B cell (primary cell): ENCODE measurements at regions of chr19 and their contacts with region 1.

Region 1: DNA sequence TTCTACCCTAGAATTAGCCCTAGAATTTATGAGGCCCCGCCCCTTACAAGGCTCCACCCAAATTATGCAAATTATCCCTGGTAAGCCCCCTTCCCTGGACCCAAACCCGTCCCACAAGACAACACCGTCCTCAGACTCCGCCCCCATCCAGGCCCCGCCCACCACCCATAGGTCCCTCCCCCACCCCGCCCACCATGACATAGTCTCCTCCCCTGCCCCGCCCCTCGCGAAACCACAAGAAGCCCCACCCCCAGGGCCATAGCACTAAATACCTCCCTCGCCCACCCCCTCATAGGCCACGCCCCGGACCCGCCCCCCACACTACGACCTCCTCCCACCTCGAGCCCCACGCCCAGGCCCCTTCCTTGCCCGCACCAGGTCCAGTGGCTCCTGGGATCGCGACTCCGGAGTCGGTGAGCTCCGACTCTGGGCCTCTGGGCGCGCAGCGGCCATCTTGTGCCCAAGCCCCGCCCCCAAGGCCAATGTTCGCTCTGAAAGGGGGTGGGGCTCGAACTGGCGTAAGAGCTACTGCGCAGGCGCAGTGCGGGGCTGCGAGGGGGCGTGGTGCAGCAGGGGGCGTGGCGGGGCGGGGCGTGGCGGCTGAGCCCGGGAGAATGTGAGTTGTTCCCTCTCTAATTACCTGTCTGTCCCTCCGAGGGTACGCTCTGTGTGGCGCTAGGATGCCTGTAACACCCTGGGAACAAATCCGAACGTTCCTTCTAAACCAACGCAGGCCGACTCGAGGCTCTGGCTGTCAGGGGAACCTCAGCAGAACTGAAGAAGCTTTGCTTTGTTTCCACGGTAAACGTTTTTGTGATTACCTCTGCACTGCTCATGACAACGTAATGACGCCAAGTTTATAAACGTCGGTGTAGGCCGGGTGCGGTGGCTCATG is at the start of gene ZNF784:
- DNase-seq: peak; percentile 97
- ATAC-seq: peak; percentile 86
- H3K4me3 ChIP-seq: peak within 1 kb of the TSS in 4 of 5 experiments; percentile 47 to 84 (median 69)
- H3K4me3 Mint-ChIP-seq: peak within 1 kb of the TSS; percentile 95
- H3K27ac ChIP-seq: peak within 1 kb of the TSS; percentile 87
- H3K27ac Mint-ChIP-seq: peak within 1 kb of the TSS; percentile 99
- H3K4me1 ChIP-seq: peaks cover 10 to 14% of the 10 kb centered on the region in 2 donors
- H3K4me1 Mint-ChIP-seq: peaks cover 18% of the 10 kb centered on the region
- H3K27me3 ChIP-seq: no peaks in the 10 kb centered on the region
- H3K27me3 Mint-ChIP-seq: no peaks in the 10 kb centered on the region
- CTCF ChIP-seq: no peak
- total RNA-seq, gene ZNF784: 9.7 and 11.5 TPM in 2 replicates

Region 2: DNA sequence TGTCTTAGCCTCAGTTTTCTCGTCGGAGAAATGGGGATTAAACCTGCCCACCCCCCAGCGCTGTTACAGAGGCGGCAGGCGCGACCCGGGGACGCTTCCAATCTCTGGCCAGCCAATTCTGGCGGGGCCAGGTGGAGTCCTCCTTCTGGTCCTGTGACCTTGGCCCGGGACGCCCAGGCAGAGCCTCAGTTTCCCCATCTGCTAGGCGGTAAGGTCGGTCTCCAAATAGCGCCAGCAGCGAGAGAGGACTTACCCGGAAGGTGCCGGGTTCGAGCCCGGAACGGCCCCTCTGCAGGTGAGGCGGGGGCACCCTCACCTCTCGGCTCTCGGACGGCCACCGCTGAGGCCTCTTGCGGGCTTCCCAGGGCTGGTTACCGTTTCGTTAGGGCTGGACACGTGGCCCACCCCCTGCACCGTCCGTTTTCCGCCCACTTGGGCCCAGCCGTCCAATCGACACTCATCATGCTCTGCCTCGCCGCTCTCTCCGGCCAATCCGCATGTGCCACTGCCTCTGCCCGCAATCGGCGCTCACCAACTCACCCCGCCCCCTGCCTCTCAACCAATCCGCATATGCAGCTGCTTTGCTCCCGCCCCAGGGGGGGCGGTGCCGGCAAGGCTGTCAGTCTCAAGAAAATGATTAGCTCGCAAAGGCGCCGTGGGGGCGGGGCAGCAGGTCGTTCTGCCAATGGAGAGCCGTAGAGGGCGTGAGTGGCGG is 162.9 kb before region 1 on chr19 and contains the start of gene ISOC2:
- CTCF ChIA-PET with region 1: interaction called, 11 read pairs
- POLR2A ChIA-PET with region 1: no interaction called
- intact Hi-C with region 1: loop called (anchors 1 kb)
- DNase-seq: peak; percentile 100
- ATAC-seq: peak; percentile 97
- H3K4me3 ChIP-seq: peak within 1 kb of the TSS; percentile 56 to 98 (median 90)
- H3K4me3 Mint-ChIP-seq: peak within 1 kb of the TSS; percentile 87
- H3K27ac ChIP-seq: peak within 1 kb of the TSS; percentile 73 to 78
- H3K27ac Mint-ChIP-seq: peak within 1 kb of the TSS; percentile 81
- H3K4me1 ChIP-seq: peaks cover 10 to 14% of the 10 kb centered on the region in 2 donors
- H3K4me1 Mint-ChIP-seq: peaks cover 20% of the 10 kb centered on the region
- H3K27me3 ChIP-seq: no peaks in the 10 kb centered on the region
- H3K27me3 Mint-ChIP-seq: no peaks in the 10 kb centered on the region
- CTCF ChIP-seq: no peak
- total RNA-seq, gene ISOC2: 10.0 and 11.1 TPM in 2 replicates

Region 3: DNA sequence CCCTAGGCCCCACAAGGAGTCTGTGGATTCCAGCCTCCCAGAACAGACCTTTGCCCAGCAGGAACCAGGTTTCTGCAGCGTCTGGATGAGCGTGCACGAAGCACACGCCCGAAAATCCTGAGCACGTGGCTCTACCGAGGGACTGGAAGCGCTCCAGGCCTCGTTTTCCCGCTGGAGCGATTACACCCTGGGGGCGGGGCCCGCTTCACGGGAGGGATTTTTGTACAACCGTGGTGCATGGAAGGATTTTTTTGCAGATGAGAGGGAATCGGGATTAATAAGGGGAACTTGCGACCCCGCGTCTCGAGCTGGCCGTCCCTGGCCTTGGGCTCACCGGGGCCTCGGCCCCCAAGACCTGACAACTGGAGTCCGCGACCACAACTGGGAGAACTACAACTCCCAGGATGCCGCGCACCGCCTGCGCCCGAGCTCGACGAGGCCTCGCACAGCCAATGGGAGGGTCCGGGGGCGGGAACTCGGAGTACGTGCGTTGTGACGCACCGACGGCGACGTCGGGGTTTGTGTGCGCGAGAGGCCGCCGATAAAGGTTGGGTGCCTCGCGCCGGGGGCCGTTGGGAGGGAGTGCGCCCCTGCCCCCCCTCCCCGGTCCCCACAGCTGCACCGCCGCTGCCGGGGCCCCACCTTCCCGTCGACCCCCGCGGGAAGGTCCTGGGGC is 148.1 kb before region 1 on chr19 and contains the start of gene ZNF628:
- CTCF ChIA-PET with region 1: interaction called, 5 read pairs
- POLR2A ChIA-PET with region 1: interaction called, 5 read pairs
- intact Hi-C with region 1: loop called (anchors 1 kb)
- DNase-seq: peak; percentile 99
- ATAC-seq: peak; percentile 90
- H3K4me3 ChIP-seq: peak within 1 kb of the TSS; percentile 63 to 97 (median 77)
- H3K4me3 Mint-ChIP-seq: peak within 1 kb of the TSS; percentile 95
- H3K27ac ChIP-seq: peak within 1 kb of the TSS; percentile 69 to 92
- H3K27ac Mint-ChIP-seq: peak within 1 kb of the TSS; percentile 97
- H3K4me1 ChIP-seq: peaks cover 15 to 21% of the 10 kb centered on the region in 2 donors
- H3K4me1 Mint-ChIP-seq: peaks cover 34% of the 10 kb centered on the region
- H3K27me3 ChIP-seq: no peaks in the 10 kb centered on the region
- H3K27me3 Mint-ChIP-seq: no peaks in the 10 kb centered on the region
- CTCF ChIP-seq: no peak
- total RNA-seq, gene ZNF628: 13.3 and 15.5 TPM in 2 replicates

Region 4: DNA sequence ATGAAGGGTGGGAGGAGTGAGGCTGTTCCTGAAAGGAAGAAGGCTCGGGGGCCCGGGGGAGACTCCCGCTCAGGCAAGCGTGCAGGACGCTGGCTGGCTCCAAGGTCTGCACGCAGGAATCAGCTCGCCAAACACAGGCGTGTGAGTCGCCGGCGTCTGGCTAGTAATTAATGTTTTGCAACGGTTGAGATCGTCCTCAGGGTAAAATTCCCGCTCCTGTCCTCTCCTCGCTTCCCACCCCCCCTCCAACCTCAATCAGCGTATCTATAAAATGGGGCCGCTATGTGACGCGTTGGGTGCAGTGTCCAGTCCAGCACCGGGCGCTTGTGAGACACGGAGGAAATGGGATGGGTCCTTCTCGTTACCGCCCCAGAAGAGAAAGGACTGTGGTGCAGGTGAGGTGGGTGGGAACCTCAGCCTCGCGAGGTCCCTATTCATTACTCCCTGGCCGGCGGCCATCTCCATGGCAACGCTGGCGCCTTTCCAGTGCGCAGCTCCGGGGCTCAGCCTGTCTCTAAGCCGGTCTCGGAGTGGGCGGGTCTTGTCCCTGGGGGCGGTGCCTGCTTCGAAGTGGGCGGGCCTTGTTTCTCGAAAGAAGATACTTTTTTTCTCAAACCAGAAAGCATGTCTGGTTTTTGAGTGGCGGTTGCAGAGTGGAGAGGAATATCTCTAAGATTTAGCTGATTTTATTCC is 37.2 kb before region 1 on chr19:
- CTCF ChIA-PET with region 1: no interaction called
- POLR2A ChIA-PET with region 1: interaction called, 3 read pairs
- intact Hi-C with region 1: loop called (anchors 1 kb)
- DNase-seq: peak; percentile 93
- ATAC-seq: peak; percentile 94
- H3K4me3 ChIP-seq: peak overlapping the region; percentile 33 to 59 (median 41)
- H3K4me3 Mint-ChIP-seq: peak overlapping the region; percentile 90
- H3K27ac ChIP-seq: no peak overlapping the region
- H3K27ac Mint-ChIP-seq: peak overlapping the region; percentile 84
- H3K4me1 ChIP-seq: peaks cover 24 to 27% of the 10 kb centered on the region in 2 donors
- H3K4me1 Mint-ChIP-seq: peaks cover 26% of the 10 kb centered on the region
- H3K27me3 ChIP-seq: no peaks in the 10 kb centered on the region
- H3K27me3 Mint-ChIP-seq: no peaks in the 10 kb centered on the region
- CTCF ChIP-seq: no peak

Region 5: GRCh38 chr19:55605207-55605636 is 19.1 kb before region 1 on chr19:
- CTCF ChIA-PET with region 1: interaction called, 25 read pairs
- POLR2A ChIA-PET with region 1: interaction called, 5 read pairs
- intact Hi-C with region 1: loop called (anchors 1 kb)
- DNase-seq: peak; percentile 97
- ATAC-seq: peak; percentile 76
- H3K4me3 ChIP-seq: peak overlapping the region; percentile 43 to 84 (median 70)
- H3K4me3 Mint-ChIP-seq: peak overlapping the region; percentile 86
- H3K27ac ChIP-seq: peak overlapping the region; percentile 74 to 85
- H3K27ac Mint-ChIP-seq: peak overlapping the region; percentile 94
- H3K4me1 ChIP-seq: peaks cover 17 to 35% of the 10 kb centered on the region in 2 donors
- H3K4me1 Mint-ChIP-seq: peaks cover 56% of the 10 kb centered on the region
- H3K27me3 ChIP-seq: no peaks in the 10 kb centered on the region
- H3K27me3 Mint-ChIP-seq: no peaks in the 10 kb centered on the region
- CTCF ChIP-seq: no peak

Region 6: GRCh38 chr19:55661826-55662225 is 37.5 kb after region 1 on chr19:
- CTCF ChIA-PET with region 1: no interaction called
- POLR2A ChIA-PET with region 1: no interaction called
- intact Hi-C with region 1: no loop called
- DNase-seq: no peak
- ATAC-seq: no peak
- H3K4me3 ChIP-seq: no peak overlapping the region
- H3K4me3 Mint-ChIP-seq: no peak overlapping the region
- H3K27ac ChIP-seq: no peak overlapping the region
- H3K27ac Mint-ChIP-seq: peak overlapping the region; percentile 15
- H3K4me1 ChIP-seq: peaks cover 23 to 29% of the 10 kb centered on the region in 2 donors
- H3K4me1 Mint-ChIP-seq: peaks cover 40% of the 10 kb centered on the region
- H3K27me3 ChIP-seq: no peaks in the 10 kb centered on the region
- H3K27me3 Mint-ChIP-seq: no peaks in the 10 kb centered on the region
- CTCF ChIP-seq: no peak

Region 7: GRCh38 chr19:55930996-55931515 is 306.7 kb after region 1 on chr19:
- CTCF ChIA-PET with region 1: no interaction called
- POLR2A ChIA-PET with region 1: no interaction called
- intact Hi-C with region 1: no loop called
- DNase-seq: no peak
- ATAC-seq: no peak
- H3K4me3 ChIP-seq: no peak overlapping the region
- H3K4me3 Mint-ChIP-seq: no peak overlapping the region
- H3K27ac ChIP-seq: no peak overlapping the region
- H3K27ac Mint-ChIP-seq: no peak overlapping the region
- H3K4me1 ChIP-seq: no peaks in the 10 kb centered on the region
- H3K4me1 Mint-ChIP-seq: no peaks in the 10 kb centered on the region
- H3K27me3 ChIP-seq: no peaks in the 10 kb centered on the region
- H3K27me3 Mint-ChIP-seq: peaks cover 8% of the 10 kb centered on the region
- CTCF ChIP-seq: no peak

Region 8: DNA sequence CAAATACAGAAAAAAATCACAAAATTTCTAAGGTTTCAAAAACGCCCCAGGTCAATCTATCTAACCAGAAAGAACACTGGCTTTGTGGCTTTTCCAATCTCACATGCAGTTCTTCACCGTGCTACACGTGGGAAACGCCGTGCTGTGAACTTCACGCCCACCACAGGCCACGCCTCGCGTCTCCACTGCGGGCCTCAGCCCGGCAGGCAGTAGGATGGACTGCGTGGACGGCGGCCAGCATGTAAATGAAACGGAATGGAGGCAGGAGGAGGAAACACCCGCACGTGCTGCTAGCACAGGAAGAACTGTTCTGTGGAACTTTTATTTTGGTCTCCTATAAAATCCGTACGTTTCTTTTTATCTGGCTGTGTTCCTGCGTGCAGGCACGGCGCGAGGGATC is 472.9 kb after region 1 on chr19:
- CTCF ChIA-PET with region 1: no interaction called
- POLR2A ChIA-PET with region 1: no interaction called
- intact Hi-C with region 1: no loop called
- DNase-seq: no peak
- ATAC-seq: no peak
- H3K4me3 ChIP-seq: no peak overlapping the region
- H3K4me3 Mint-ChIP-seq: no peak overlapping the region
- H3K27ac ChIP-seq: no peak overlapping the region
- H3K27ac Mint-ChIP-seq: no peak overlapping the region
- H3K4me1 ChIP-seq: no peaks in the 10 kb centered on the region
- H3K4me1 Mint-ChIP-seq: peaks cover 4% of the 10 kb centered on the region
- H3K27me3 ChIP-seq: no peaks in the 10 kb centered on the region
- H3K27me3 Mint-ChIP-seq: no peaks in the 10 kb centered on the region
- CTCF ChIP-seq: no peak

Region 9: GRCh38 chr19:56140583-56141416 is 516.4 kb after region 1 on chr19 and contains the start of gene ZNF444:
- CTCF ChIA-PET with region 1: no interaction called
- POLR2A ChIA-PET with region 1: no interaction called
- intact Hi-C with region 1: loop called (anchors 10 kb)
- DNase-seq: peak; percentile 99
- ATAC-seq: peak; percentile 85
- H3K4me3 ChIP-seq: peak within 1 kb of the TSS; percentile 61 to 83 (median 79)
- H3K4me3 Mint-ChIP-seq: peak within 1 kb of the TSS; percentile 87
- H3K27ac ChIP-seq: peak within 1 kb of the TSS; percentile 84 to 89
- H3K27ac Mint-ChIP-seq: peak within 1 kb of the TSS; percentile 93
- H3K4me1 ChIP-seq: peaks cover 13 to 17% of the 10 kb centered on the region in 2 donors
- H3K4me1 Mint-ChIP-seq: peaks cover 32% of the 10 kb centered on the region
- H3K27me3 ChIP-seq: no peaks in the 10 kb centered on the region
- H3K27me3 Mint-ChIP-seq: no peaks in the 10 kb centered on the region
- CTCF ChIP-seq: no peak
- total RNA-seq, gene ZNF444: 32.0 and 37.7 TPM in 2 replicates